Activated naive CD4-positive, alpha-beta T cell treated with anti-CD3 and anti-CD28 coated beads for 36 hours (primary cell): ENCODE measurements at regions of chr3 and their contacts with region 1.

Region 1: GRCh38 chr3:184174646-184175492 is at the start of gene AP2M1:
- DNase-seq: peak; percentile 98
- H3K4me3 Mint-ChIP-seq: peak within 1 kb of the TSS; percentile 88
- H3K27ac Mint-ChIP-seq: peak within 1 kb of the TSS; percentile 56
- H3K4me1 Mint-ChIP-seq: peaks cover 29% of the 10 kb centered on the region
- H3K27me3 Mint-ChIP-seq: no peaks in the 10 kb centered on the region
- total RNA-seq, gene AP2M1: 206 to 212 TPM

Region 2: GRCh38 chr3:184017672-184018423 is 157.0 kb before region 1 on chr3 and contains the start of gene ABCC5:
- CTCF ChIA-PET with region 1: interaction called, 3 read pairs
- intact Hi-C with region 1: loop called (anchors 1 kb)
- DNase-seq: peak; percentile 88
- H3K4me3 Mint-ChIP-seq: peak within 1 kb of the TSS; percentile 98
- H3K27ac Mint-ChIP-seq: peak within 1 kb of the TSS; percentile 77
- H3K4me1 Mint-ChIP-seq: peaks cover 16% of the 10 kb centered on the region
- H3K27me3 Mint-ChIP-seq: no peaks in the 10 kb centered on the region
- total RNA-seq, gene ABCC5: 11.2 to 12.0 TPM

Region 3: DNA sequence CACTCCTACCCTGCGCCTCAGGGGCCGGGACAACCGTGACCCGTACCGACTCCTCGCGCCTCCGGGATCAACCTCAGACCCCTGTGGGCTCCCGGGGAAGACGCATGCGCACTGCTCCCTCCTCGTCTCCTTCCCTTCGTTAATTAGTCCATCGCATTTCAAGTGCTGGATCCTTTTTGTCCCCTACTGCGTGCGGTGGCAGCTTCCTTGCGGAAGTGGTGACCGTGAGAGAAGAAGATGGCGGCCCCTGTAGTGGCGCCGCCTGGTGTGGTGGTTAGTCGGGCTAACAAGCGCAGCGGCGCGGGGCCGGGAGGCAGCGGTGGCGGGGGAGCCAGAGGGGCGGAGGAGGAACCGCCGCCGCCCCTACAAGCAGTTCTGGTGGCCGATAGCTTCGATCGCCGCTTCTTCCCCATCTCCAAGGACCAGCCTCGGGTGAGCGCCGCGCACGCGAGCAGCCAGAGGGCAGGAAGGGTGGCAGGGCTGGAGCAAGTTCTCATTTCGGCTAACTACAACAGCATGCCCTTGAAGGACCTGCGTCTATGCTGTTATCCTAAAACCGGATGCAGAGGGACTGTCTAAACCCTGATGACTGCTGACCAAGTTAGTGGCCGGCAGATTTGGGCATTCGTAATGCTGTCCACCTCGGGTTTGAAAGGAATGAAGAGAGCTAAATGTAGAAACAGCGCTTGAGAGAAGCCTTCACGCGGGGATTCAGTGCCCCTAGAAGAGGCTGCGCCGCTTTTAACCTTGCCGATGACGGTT is 39.5 kb before region 1 on chr3 and contains the start of gene EIF2B5:
- CTCF ChIA-PET with region 1: no interaction called
- intact Hi-C with region 1: loop called (anchors 1 kb)
- DNase-seq: peak; percentile 94
- H3K4me3 Mint-ChIP-seq: peak within 1 kb of the TSS; percentile 97
- H3K27ac Mint-ChIP-seq: peak within 1 kb of the TSS; percentile 97
- H3K4me1 Mint-ChIP-seq: peaks cover 29% of the 10 kb centered on the region
- H3K27me3 Mint-ChIP-seq: no peaks in the 10 kb centered on the region
- total RNA-seq, gene EIF2B5: 48.8 to 56.4 TPM

Region 4: GRCh38 chr3:184145111-184145524 is 29.8 kb before region 1 on chr3:
- CTCF ChIA-PET with region 1: interaction called, 10 read pairs
- intact Hi-C with region 1: no loop called
- DNase-seq: peak; percentile 55
- H3K4me3 Mint-ChIP-seq: no peak overlapping the region
- H3K27ac Mint-ChIP-seq: no peak overlapping the region
- H3K4me1 Mint-ChIP-seq: peaks cover 2% of the 10 kb centered on the region
- H3K27me3 Mint-ChIP-seq: no peaks in the 10 kb centered on the region

Region 5: DNA sequence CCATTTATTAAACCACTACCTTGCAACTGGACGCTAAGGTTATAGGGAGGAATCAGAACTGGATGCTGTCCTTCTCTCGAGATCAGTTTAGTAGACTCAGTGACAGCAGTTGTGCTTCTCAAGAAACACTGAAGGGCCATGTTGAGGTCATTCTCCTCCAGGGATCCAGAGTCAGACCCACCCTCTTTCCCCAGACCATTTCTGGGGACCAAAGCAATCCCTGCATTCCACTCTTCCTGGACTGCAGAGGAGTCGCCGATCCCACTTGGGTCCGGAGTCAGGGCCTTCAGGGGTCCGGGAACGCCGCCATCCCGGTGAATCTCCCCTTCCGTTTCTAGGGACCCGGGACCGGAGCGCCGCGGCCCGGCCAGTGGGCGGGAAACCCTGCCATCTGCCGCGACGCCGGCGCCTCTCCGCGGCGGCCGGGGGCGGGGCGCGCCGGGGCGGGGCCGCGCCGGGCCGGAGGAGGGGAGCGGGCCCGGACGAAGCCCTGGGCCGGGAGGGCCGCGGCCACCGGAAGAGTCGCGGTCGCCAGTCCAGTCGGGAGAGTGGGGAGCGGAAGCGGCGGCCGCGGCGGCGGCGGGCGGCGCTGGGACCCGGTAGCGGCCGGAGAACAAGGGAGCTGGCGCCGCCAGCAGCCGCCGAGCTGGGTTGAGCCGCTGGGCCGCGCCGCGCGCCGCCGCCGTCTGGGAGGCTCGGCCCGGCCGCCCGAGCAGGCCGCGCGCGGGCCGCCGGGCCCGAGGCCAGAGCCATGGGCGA is 19.8 kb before region 1 on chr3 and contains the start of gene DVL3:
- CTCF ChIA-PET with region 1: interaction called, 3 read pairs
- intact Hi-C with region 1: loop called (anchors 1 kb)
- DNase-seq: peak; percentile 25
- H3K4me3 Mint-ChIP-seq: peak within 1 kb of the TSS; percentile 94
- H3K27ac Mint-ChIP-seq: peak within 1 kb of the TSS; percentile 66
- H3K4me1 Mint-ChIP-seq: peaks cover 19% of the 10 kb centered on the region
- H3K27me3 Mint-ChIP-seq: no peaks in the 10 kb centered on the region
- total RNA-seq, gene DVL3: 19.6 to 19.9 TPM

Region 6: GRCh38 chr3:184185461-184186308 is 10.8 kb after region 1 on chr3 and contains the start of gene ABCF3:
- CTCF ChIA-PET with region 1: no interaction called
- intact Hi-C with region 1: loop called (anchors 1 kb)
- DNase-seq: peak; percentile 99
- H3K4me3 Mint-ChIP-seq: peak within 1 kb of the TSS; percentile 94
- H3K27ac Mint-ChIP-seq: peak within 1 kb of the TSS; percentile 92
- H3K4me1 Mint-ChIP-seq: peaks cover 28% of the 10 kb centered on the region
- H3K27me3 Mint-ChIP-seq: no peaks in the 10 kb centered on the region
- total RNA-seq, gene ABCF3: 38.5 to 39.1 TPM

Region 7: GRCh38 chr3:184196536-184196935 is 21.7 kb after region 1 on chr3:
- CTCF ChIA-PET with region 1: no interaction called
- intact Hi-C with region 1: no loop called
- DNase-seq: no peak
- H3K4me3 Mint-ChIP-seq: no peak overlapping the region
- H3K27ac Mint-ChIP-seq: no peak overlapping the region
- H3K4me1 Mint-ChIP-seq: no peaks in the 10 kb centered on the region
- H3K27me3 Mint-ChIP-seq: no peaks in the 10 kb centered on the region

Region 8: DNA sequence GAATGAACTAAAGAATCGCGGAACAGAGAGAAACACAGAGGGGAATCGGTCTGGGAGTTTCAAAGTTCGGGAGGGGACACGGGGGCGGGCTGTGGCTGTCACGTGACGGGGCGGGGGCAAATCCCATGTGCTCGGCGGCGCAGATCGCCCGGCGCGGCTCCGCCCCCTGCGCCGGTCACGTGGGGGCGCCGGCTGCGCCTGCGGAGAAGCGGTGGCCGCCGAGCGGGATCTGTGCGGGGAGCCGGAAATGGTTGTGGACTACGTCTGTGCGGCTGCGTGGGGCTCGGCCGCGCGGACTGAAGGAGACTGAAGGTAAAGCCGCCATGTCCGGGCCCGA is 139.5 kb after region 1 on chr3 and contains the start of gene EIF4G1:
- CTCF ChIA-PET with region 1: no interaction called
- intact Hi-C with region 1: loop called (anchors 1 kb)
- DNase-seq: peak; percentile 93
- H3K4me3 Mint-ChIP-seq: peak within 1 kb of the TSS; percentile 86
- H3K27ac Mint-ChIP-seq: peak within 1 kb of the TSS; percentile 90
- H3K4me1 Mint-ChIP-seq: peaks cover 29% of the 10 kb centered on the region
- H3K27me3 Mint-ChIP-seq: no peaks in the 10 kb centered on the region
- total RNA-seq, gene EIF4G1: 345 to 375 TPM